Ovary (tissue), 10 donors: ENCODE measurements at regions of chr14 and their contacts with region 1.

Region 1: GRCh38 chr14:73633116-73634010 is 11.4 kb upstream of the DNAL1 start:
- DNase-seq: peak; percentile 45 to 77 (median 70)
- H3K4me3 ChIP-seq: peak overlapping the region; percentile 48
- H3K27ac ChIP-seq: peak overlapping the region; percentile 50 to 53
- H3K4me1 ChIP-seq: peaks cover 4% of the 10 kb centered on the region
- H3K27me3 ChIP-seq: no peaks in the 10 kb centered on the region
- CTCF ChIP-seq: peak in 2 of 3 donors; percentile 85 to 86
- EP300 ChIP-seq: no peak
- POLR2A ChIP-seq: no peak

Region 2: GRCh38 chr14:73503648-73504047 is 129.7 kb before region 1 on chr14:
- intact Hi-C with region 1: loop called in 3 of 4 experiments (anchors 2 to 5 kb)
- DNase-seq: no peak
- H3K4me3 ChIP-seq: no peak overlapping the region
- H3K27ac ChIP-seq: no peak overlapping the region
- H3K4me1 ChIP-seq: no peaks in the 10 kb centered on the region
- H3K27me3 ChIP-seq: no peaks in the 10 kb centered on the region
- CTCF ChIP-seq: no peak
- EP300 ChIP-seq: no peak
- POLR2A ChIP-seq: no peak

Region 3: DNA sequence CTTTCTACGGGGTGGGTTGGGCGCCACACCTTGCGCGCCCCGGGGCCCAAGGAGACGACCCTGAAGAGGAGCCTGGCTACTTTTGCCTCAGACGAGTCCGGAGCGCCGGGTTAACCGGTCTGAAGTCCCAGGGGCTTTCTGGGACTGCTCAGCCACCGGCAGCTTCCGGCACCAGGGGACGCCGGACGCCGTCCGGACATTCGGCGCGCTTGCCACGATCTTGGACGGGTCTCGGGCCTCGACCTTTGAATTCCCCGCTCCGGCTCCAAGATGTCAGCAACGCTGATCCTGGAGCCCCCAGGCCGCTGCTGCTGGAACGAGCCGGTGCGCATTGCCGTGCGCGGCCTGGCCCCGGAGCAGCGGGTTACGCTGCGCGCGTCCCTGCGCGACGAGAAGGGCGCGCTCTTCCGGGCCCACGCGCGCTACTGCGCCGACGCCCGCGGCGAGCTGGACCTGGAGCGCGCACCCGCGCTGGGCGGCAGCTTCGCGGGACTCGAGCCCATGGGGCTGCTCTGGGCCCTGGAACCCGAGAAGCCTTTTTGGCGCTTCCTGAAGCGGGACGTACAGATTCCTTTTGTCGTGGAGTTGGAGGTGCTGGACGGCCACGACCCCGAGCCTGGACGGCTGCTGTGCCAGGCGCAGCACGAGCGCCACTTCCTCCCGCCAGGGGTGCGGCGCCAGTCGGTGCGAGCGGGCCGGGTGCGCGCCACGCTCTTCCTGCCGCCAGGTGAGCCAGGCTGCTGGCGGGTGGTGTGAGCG is 41.5 kb before region 1 on chr14 and contains the start of gene ACOT4:
- intact Hi-C with region 1: no loop called
- DNase-seq: peak in 2 of 5 donors; percentile 35 to 66
- H3K4me3 ChIP-seq: peak within 1 kb of the TSS; percentile 48
- H3K27ac ChIP-seq: no peak within 1 kb of the TSS
- H3K4me1 ChIP-seq: peaks cover 4% of the 10 kb centered on the region
- H3K27me3 ChIP-seq: no peaks in the 10 kb centered on the region
- CTCF ChIP-seq: no peak
- EP300 ChIP-seq: no peak
- POLR2A ChIP-seq: no peak
- total RNA-seq, gene ACOT4: 0.28 to 2.1 (median 0.38) TPM